ENCODE measurements at regions of chr1 and their contacts with region 1.

Region 1: GRCh38 chr1:51506537-51506936 is 12.5 kb downstream of the EPS15 start:
- DNase-seq: no peak
- ATAC-seq: peak; percentile 22
- H3K4me3 Mint-ChIP-seq: peak overlapping the region; percentile 52
- H3K27ac Mint-ChIP-seq: peak overlapping the region; percentile 62
- H3K4me1 Mint-ChIP-seq: peaks cover 83% of the 10 kb centered on the region
- H3K27me3 Mint-ChIP-seq: no peaks in the 10 kb centered on the region
- CTCF ChIP-seq: no peak

Region 2: DNA sequence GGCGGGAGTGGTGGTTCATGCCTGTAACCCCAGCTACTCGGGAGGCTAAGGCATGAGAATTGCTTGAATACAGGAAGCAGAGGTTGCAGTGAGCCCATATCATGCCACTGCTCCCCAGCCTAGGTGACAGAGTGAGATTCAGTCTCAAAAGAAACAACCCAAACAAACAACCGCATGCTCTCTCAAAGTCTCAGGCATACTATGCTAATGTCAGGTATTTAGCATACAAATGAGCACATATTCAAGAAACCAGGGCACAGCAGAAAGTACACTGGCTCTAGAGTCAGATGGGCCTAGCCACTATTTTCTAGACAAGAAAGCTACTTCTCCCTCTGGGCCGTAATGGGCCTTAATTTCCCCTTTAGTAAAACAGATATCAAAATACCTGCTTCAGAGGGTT is 1342.9 kb before region 1 on chr1:
- CTCF ChIA-PET with region 1: no interaction called
- POLR2A ChIA-PET with region 1: no interaction called
- intact Hi-C with region 1: no loop called
- DNase-seq: no peak
- ATAC-seq: no peak
- H3K4me3 Mint-ChIP-seq: no peak overlapping the region
- H3K27ac Mint-ChIP-seq: no peak overlapping the region
- H3K4me1 Mint-ChIP-seq: no peaks in the 10 kb centered on the region
- H3K27me3 Mint-ChIP-seq: peaks cover 2% of the 10 kb centered on the region
- CTCF ChIP-seq: no peak

Region 3: GRCh38 chr1:51433269-51433971 is 73.1 kb before region 1 on chr1:
- CTCF ChIA-PET with region 1: no interaction called
- POLR2A ChIA-PET with region 1: interaction called, 11 read pairs
- intact Hi-C with region 1: no loop called
- DNase-seq: no peak
- ATAC-seq: no peak
- H3K4me3 Mint-ChIP-seq: no peak overlapping the region
- H3K27ac Mint-ChIP-seq: peak overlapping the region; percentile 65
- H3K4me1 Mint-ChIP-seq: peaks cover 22% of the 10 kb centered on the region
- H3K27me3 Mint-ChIP-seq: no peaks in the 10 kb centered on the region
- CTCF ChIP-seq: no peak

Region 4: DNA sequence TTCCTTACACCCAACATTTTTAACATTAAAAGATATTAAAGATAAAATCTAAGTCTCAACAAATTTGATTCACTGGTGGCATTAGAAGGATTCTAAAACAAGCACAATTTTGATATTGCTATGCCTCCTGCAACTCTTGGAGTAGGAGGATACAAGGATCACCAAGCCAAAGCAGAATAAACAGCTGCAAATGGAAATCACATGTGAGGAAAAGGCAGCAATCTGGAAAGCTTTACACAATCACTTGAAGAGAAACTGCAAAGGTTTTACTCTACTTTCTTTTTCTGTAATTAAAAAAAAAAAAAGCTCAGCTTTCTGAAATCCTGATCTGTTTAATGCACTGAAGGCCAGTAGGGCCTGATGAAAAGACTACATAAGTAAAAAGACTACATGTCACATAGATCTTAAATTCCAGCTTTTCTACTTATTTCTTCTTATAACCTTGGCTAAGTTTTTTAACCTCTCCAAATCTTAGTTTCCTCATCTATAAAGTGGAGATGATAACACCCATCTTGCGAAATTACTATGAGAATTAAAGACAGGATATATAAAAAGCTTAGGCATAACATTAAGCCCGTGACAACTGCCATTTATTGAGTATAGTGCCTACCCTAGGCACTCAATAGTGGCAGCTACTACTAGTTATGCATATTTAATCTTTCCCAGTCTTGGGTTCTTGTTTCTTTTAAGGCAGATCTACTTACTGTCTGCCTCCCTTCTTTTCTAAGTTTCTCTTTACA is 61.0 kb before region 1 on chr1:
- CTCF ChIA-PET with region 1: no interaction called
- POLR2A ChIA-PET with region 1: no interaction called
- intact Hi-C with region 1: no loop called
- DNase-seq: no peak
- ATAC-seq: no peak
- H3K4me3 Mint-ChIP-seq: no peak overlapping the region
- H3K27ac Mint-ChIP-seq: no peak overlapping the region
- H3K4me1 Mint-ChIP-seq: peaks cover 9% of the 10 kb centered on the region
- H3K27me3 Mint-ChIP-seq: no peaks in the 10 kb centered on the region
- CTCF ChIP-seq: no peak

Region 5: DNA sequence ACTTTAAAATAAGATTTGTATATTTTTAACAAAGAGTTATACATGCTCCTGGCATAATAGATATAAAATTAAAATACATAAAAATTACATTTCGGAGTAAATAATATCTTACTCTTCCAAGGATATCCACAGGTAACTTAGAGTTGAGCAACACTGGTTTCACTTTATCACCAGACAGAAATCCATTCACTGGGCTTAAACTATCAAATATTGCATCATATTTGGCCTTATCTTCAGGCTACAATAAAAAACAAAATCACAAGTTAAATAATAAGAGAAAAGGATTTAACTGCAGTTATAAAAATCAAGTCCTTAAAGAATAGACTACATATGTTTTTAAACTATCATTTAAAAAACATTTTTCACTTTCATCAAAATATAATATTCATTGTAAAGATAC is 43.0 kb before region 1 on chr1:
- CTCF ChIA-PET with region 1: no interaction called
- POLR2A ChIA-PET with region 1: no interaction called
- intact Hi-C with region 1: no loop called
- DNase-seq: no peak
- ATAC-seq: no peak
- H3K4me3 Mint-ChIP-seq: no peak overlapping the region
- H3K27ac Mint-ChIP-seq: no peak overlapping the region
- H3K4me1 Mint-ChIP-seq: no peaks in the 10 kb centered on the region
- H3K27me3 Mint-ChIP-seq: no peaks in the 10 kb centered on the region
- CTCF ChIP-seq: no peak

Region 6: GRCh38 chr1:52328615-52329014 is 822.1 kb after region 1 on chr1:
- CTCF ChIA-PET with region 1: no interaction called
- POLR2A ChIA-PET with region 1: no interaction called
- intact Hi-C with region 1: no loop called
- DNase-seq: no peak
- ATAC-seq: no peak
- H3K4me3 Mint-ChIP-seq: no peak overlapping the region
- H3K27ac Mint-ChIP-seq: no peak overlapping the region
- H3K4me1 Mint-ChIP-seq: no peaks in the 10 kb centered on the region
- H3K27me3 Mint-ChIP-seq: no peaks in the 10 kb centered on the region
- CTCF ChIP-seq: no peak

Measured in activated B cell treated with CpG ODN at 0.5 μM for 24 hours (primary cell).